ENCODE measurements at regions of chr20 and their contacts with region 1.

Region 1: GRCh38 chr20:37202267-37202943 is 23.1 kb upstream of the MROH8 start:
- DNase-seq: peak; percentile 57 to 92
- H3K4me3 ChIP-seq: no peak overlapping the region
- H3K27ac ChIP-seq: peak overlapping the region; percentile 40
- H3K4me1 ChIP-seq: peaks cover 9% of the 10 kb centered on the region
- H3K27me3 ChIP-seq: no peaks in the 10 kb centered on the region
- CTCF ChIP-seq: peak; percentile 89

Region 2: DNA sequence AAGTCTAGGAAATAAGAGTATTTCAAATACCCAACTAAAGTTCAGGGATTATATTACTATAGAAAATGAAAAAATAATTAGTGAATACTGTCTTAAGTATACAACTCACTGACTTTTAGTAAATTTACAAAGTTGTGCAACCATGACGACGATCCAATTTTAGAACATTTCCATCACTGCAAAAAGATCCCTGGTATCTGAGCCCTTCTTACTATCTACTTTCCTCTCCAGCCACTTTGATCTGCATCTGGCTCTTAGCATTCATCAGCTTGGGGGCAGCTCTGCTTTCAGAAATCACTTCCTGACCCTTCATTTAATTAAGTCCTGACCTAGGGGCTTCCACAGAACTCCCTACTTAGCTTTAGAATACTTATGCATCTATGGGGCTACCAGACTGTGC is 68.5 kb before region 1 on chr20:
- CTCF ChIA-PET with region 1: no interaction called
- POLR2A ChIA-PET with region 1: no interaction called
- intact Hi-C with region 1: no loop called
- DNase-seq: no peak
- H3K4me3 ChIP-seq: no peak overlapping the region
- H3K27ac ChIP-seq: no peak overlapping the region
- H3K4me1 ChIP-seq: no peaks in the 10 kb centered on the region
- H3K27me3 ChIP-seq: no peaks in the 10 kb centered on the region; the same call in 1 of the 2 replicates
- CTCF ChIP-seq: no peak

Region 3: GRCh38 chr20:37251825-37252477 is 49.5 kb after region 1 on chr20:
- CTCF ChIA-PET with region 1: interaction called, 10 read pairs
- POLR2A ChIA-PET with region 1: no interaction called
- intact Hi-C with region 1: no loop called
- DNase-seq: no peak
- H3K4me3 ChIP-seq: no peak overlapping the region
- H3K27ac ChIP-seq: no peak overlapping the region
- H3K4me1 ChIP-seq: no peaks in the 10 kb centered on the region
- H3K27me3 ChIP-seq: peaks cover 19% of the 10 kb centered on the region
- CTCF ChIP-seq: no peak